ENCODE measurements at regions of chr16 and their contacts with region 1.

Region 1: DNA sequence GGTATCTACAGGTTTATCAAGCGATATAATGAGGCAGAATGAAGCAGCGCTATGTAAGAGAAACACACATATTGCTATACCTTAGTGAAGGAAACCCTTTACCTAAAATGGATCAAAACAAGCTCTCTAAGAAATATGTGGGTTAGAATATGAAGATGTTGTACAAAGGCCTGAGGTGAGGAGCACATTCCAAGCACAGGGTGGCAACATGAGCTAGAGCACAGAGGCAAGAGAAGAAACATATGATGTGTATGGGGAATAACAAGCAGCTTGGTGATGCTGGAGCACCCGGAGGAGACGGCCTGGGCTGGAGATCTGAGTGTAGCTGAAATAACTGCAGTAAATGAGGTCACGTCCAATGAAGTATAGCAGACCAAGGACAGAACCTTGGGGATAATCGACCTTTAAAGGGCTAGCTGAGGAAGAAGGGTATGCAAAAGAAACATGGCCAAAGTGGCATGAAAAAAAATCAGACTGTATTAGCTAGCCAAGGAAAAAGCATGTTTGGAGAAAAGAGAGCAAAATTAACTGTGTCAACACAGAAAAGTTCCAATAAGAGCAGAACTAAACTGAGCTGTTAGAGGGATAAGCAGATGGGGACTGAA is 44.0 kb downstream of the MARVELD3 start:
- DNase-seq: no peak
- ATAC-seq: no peak
- H3K4me3 ChIP-seq: no peak overlapping the region
- H3K27ac ChIP-seq: no peak overlapping the region
- H3K4me1 ChIP-seq: no peaks in the 10 kb centered on the region
- H3K27me3 ChIP-seq: no peaks in the 10 kb centered on the region
- CTCF ChIP-seq: 0 out of 6 replicates have a peak, but pooled peaks of 1 of the 3 experiments have one; percentile 4
- POLR2A ChIP-seq: no peak
- RAD21 ChIP-seq: peak; percentile 28; the same call in 1 of the 2 replicates

Region 2: DNA sequence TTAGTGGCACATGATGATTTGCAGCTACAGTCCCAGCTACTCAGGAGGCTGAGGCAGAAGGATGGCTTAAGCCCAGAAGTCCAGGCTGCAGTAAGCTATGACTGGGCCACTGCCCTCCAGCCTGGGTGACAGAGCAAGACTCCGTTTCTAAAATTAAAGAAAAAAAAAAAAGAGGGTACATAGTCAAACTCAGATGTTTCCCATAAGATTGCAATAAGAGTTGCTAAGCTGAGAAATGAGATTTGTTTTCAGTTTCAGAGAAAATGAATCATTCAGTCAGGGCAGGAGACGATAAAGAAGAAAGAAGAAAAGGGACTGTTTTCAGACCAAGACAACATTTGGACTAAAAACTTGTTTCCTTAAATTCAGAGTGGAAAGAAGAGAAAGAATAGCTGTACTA is 84.6 kb after region 1 on chr16:
- CTCF ChIA-PET with region 1: no interaction called
- POLR2A ChIA-PET with region 1: no interaction called
- RAD21 ChIA-PET with region 1: no interaction called
- intact Hi-C with region 1: loop called (anchors 5 kb)
- DNase-seq: no peak
- ATAC-seq: no peak
- H3K4me3 ChIP-seq: no peak overlapping the region
- H3K27ac ChIP-seq: no peak overlapping the region
- H3K4me1 ChIP-seq: no peaks in the 10 kb centered on the region
- H3K27me3 ChIP-seq: no peaks in the 10 kb centered on the region
- CTCF ChIP-seq: no peak
- POLR2A ChIP-seq: no peak
- RAD21 ChIP-seq: no peak

Measured in HCT116 (cell line).